Caco-2 (cell line): ENCODE measurements at regions of chr3 and their contacts with region 1.

Region 1: DNA sequence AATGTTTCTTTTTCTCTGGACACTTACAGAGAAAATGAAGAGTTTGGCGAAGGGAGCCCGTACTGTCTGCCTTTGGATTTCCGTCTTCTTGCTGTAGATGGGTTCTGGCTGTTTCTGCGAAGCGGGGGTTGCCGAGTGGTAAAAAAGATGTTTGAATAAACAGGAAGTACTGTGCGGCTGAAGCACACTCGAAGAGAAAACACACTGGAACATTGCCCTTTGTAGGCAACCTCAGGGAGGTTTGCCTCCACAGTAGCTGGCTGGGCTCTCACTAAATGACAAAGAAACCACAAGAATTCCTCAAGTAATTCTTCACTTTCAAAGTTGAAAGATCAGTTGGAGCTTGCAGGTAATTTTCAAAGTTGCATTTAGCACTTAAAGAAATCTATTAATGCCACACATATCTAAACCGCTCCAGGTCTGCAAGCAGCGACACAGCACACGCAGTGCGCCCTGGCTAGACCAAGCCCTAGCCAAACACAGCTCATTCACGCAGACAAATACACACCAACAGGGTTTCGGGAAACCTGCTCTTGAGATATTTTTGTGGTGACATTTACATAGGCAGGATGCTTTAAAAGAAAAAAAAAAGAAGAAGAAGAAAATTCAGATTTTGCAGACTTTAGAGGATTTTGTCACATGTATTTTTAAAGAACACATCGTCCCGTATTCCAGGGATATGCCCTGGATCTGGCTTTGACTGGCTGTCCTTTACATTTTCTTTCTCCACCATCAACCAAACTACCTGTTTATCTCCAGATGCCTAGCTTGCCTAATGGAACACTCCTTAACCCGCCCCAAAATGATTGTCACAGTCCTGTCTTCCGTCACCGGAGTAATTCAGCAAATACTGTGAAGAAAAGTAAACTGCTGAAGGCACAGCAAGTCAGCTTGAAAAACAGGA is 452.8 kb downstream of the FOXP1 start:
- DNase-seq: peak in 1 of 2 experiments; percentile 56
- H3K4me3 ChIP-seq: peak overlapping the region; percentile 50
- H3K4me3 Mint-ChIP-seq: peak overlapping the region; percentile 94
- H3K27ac Mint-ChIP-seq: peak overlapping the region; percentile 83
- H3K4me1 ChIP-seq: peaks cover 66% of the 10 kb centered on the region
- H3K4me1 Mint-ChIP-seq: peaks cover 37% of the 10 kb centered on the region
- H3K27me3 ChIP-seq: no peaks in the 10 kb centered on the region
- H3K27me3 Mint-ChIP-seq: no peaks in the 10 kb centered on the region
- CTCF ChIP-seq: no peak

Region 2: DNA sequence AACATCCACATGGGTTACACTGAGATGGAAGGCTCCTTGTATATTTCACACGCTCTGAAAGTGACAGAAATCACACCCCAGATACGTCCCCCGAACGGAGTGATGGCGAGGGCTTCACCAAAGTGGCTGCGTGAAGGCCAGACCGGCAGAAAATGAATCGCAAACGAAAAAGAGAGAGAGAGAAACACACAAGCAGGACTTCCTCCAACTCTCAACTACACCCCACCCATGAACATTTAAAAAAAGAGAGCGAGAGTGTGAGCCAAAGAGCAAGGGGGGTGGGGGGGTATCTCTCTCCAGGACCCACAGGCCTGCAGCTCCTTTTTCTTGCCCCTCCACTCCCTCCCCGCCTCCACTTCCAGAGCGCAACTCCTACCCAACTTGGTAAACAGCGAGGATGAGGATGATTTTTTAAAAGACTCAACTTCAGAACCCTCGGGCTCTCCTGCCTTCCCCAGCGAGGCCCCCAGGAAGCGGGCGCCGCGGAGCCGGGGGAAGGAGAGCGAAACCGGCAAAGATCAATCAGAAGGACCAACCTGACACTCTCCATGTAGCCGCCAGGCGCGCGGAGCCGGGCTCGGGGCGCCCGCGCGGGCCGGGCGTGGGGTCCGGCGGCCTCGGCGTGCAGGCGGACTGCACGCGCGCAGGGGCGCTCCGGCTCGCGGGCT is 66.3 kb before region 1 on chr3:
- CTCF ChIA-PET with region 1: no interaction called
- POLR2A ChIA-PET with region 1: no interaction called
- intact Hi-C with region 1: loop called (anchors 1 kb)
- DNase-seq: peak; percentile 56 to 70
- H3K4me3 ChIP-seq: peak overlapping the region; percentile 58
- H3K4me3 Mint-ChIP-seq: no peak overlapping the region
- H3K27ac Mint-ChIP-seq: no peak overlapping the region
- H3K4me1 ChIP-seq: peaks cover 55% of the 10 kb centered on the region
- H3K4me1 Mint-ChIP-seq: peaks cover 44% of the 10 kb centered on the region
- H3K27me3 ChIP-seq: no peaks in the 10 kb centered on the region
- H3K27me3 Mint-ChIP-seq: no peaks in the 10 kb centered on the region
- CTCF ChIP-seq: no peak

Region 3: GRCh38 chr3:71149959-71150954 is 19.5 kb after region 1 on chr3:
- CTCF ChIA-PET with region 1: no interaction called
- POLR2A ChIA-PET with region 1: interaction called, 5 read pairs
- intact Hi-C with region 1: loop called (anchors 1 kb)
- DNase-seq: no peak
- H3K4me3 ChIP-seq: no peak overlapping the region
- H3K4me3 Mint-ChIP-seq: no peak overlapping the region
- H3K27ac Mint-ChIP-seq: no peak overlapping the region
- H3K4me1 ChIP-seq: peaks cover 59% of the 10 kb centered on the region
- H3K4me1 Mint-ChIP-seq: peaks cover 49% of the 10 kb centered on the region
- H3K27me3 ChIP-seq: no peaks in the 10 kb centered on the region
- H3K27me3 Mint-ChIP-seq: no peaks in the 10 kb centered on the region
- CTCF ChIP-seq: no peak

Region 4: DNA sequence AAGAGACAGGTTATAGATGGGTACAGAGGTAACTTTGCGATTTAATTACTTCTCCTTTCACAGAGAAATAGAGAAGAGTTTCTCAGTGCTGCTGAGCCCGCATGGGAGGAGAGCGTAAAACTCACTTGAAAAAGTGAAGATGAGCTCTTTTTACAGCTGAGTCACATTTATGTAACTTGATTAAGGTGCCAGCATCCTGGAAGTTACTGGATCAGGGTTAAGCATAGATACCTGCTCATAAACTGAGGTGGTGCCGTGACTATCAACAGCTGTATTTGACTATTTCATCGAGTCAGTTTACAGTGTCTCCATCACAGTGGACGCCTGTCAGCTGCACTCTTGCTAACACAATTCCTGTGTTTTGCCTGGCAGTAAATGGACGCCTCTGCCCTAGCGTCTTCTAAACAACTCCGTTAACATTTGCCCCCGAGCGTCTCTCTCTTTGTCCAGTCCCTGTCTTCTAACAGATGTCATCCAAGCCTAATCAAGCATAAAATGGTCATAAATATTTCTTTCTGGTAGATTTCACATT is 38.2 kb after region 1 on chr3:
- CTCF ChIA-PET with region 1: no interaction called
- POLR2A ChIA-PET with region 1: no interaction called
- intact Hi-C with region 1: loop called (anchors 1 kb)
- DNase-seq: no peak
- H3K4me3 ChIP-seq: peak overlapping the region; percentile 1
- H3K4me3 Mint-ChIP-seq: peak overlapping the region; percentile 58
- H3K27ac Mint-ChIP-seq: peak overlapping the region; percentile 83
- H3K4me1 ChIP-seq: peaks cover 81% of the 10 kb centered on the region
- H3K4me1 Mint-ChIP-seq: peaks cover 66% of the 10 kb centered on the region
- H3K27me3 ChIP-seq: no peaks in the 10 kb centered on the region
- H3K27me3 Mint-ChIP-seq: no peaks in the 10 kb centered on the region
- CTCF ChIP-seq: no peak

Region 5: GRCh38 chr3:71191031-71191482 is 60.3 kb after region 1 on chr3:
- CTCF ChIA-PET with region 1: no interaction called
- POLR2A ChIA-PET with region 1: interaction called, 5 read pairs
- intact Hi-C with region 1: loop called (anchors 1 kb)
- DNase-seq: peak; percentile 75 to 77
- H3K4me3 ChIP-seq: no peak overlapping the region
- H3K4me3 Mint-ChIP-seq: no peak overlapping the region
- H3K27ac Mint-ChIP-seq: peak overlapping the region; percentile 74
- H3K4me1 ChIP-seq: peaks cover 59% of the 10 kb centered on the region
- H3K4me1 Mint-ChIP-seq: peaks cover 52% of the 10 kb centered on the region
- H3K27me3 ChIP-seq: no peaks in the 10 kb centered on the region
- H3K27me3 Mint-ChIP-seq: no peaks in the 10 kb centered on the region
- CTCF ChIP-seq: peak in 1 of 2 experiments; percentile 5

Region 6: DNA sequence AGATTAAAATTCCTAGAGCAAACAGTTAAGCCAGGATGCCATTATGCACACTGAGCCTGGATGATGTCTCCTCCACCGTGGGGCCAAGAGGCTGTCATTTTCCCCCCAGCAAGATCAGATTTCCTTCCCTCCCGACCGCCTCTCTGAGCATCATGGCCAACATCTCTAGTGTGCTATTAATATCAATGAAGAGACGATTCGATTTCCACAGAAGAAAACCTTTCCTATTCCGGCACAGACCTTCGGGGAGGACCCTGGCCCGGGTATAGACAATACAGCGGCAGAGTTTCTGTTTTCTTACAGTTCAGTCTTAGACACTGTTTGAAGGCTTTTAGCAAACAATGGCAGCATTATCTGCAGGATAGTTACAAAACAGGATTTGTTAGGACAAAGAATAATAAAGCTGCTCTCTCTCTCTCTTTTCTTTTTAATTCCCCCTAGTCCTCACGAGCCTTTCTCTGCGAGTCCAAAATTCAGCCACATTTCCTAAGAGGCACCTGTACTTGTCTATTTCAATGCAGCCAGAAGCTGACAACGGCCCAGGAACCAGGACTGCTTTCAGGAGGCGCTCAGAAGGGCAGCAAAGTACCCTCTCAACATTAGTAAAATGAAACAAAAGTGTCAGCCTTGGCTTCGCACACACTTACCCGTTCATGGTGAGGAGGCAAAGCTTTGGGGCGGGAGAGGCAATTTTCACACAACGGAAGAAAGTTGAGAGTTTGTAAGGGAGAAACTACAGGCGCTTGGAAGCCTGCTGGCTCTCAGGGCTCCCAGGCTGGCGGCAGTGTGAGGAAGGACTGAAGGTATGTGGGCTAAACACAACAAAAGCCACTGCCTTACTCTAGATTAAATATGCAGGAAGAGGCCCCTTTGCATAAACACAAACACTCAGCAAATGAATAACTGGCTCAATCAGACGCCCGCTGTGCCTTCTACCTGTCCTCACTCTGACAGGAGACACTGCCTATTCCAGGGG is 174.8 kb after region 1 on chr3:
- CTCF ChIA-PET with region 1: no interaction called
- POLR2A ChIA-PET with region 1: interaction called, 7 read pairs
- intact Hi-C with region 1: loop called (anchors 2 kb)
- DNase-seq: peak; percentile 36 to 41
- H3K4me3 ChIP-seq: peak overlapping the region; percentile 47
- H3K4me3 Mint-ChIP-seq: peak overlapping the region; percentile 93
- H3K27ac Mint-ChIP-seq: peak overlapping the region; percentile 91
- H3K4me1 ChIP-seq: peaks cover 26% of the 10 kb centered on the region
- H3K4me1 Mint-ChIP-seq: peaks cover 36% of the 10 kb centered on the region
- H3K27me3 ChIP-seq: no peaks in the 10 kb centered on the region
- H3K27me3 Mint-ChIP-seq: no peaks in the 10 kb centered on the region
- CTCF ChIP-seq: no peak